ENCODE measurements at regions of chr4 and their contacts with region 1.

Region 1: DNA sequence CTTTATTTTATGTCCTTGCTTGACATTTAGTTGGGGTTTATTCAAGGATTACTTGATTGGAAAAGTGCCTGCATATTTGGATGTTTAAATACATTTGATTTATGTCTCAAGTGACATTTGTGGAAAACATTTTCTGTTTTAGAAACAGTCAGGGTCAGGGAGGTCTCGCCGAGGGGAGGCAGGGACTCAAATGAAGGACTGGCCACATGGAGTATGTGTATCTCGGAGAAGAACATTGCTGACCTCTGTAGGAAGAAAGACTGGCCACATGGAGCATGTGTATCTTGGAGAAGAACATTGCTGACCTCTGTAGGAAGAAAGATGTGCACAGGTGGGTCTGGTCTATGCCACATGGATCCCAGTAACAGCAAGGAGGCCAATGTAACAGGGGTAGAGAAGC is 233.6 kb downstream of the TRIML1 start:
- DNase-seq: no peak
- ATAC-seq: peak; percentile 86
- H3K4me3 ChIP-seq: no peak overlapping the region
- H3K27ac ChIP-seq: no peak overlapping the region
- H3K4me1 ChIP-seq: no peaks in the 10 kb centered on the region
- H3K27me3 ChIP-seq: no peaks in the 10 kb centered on the region

Region 2: DNA sequence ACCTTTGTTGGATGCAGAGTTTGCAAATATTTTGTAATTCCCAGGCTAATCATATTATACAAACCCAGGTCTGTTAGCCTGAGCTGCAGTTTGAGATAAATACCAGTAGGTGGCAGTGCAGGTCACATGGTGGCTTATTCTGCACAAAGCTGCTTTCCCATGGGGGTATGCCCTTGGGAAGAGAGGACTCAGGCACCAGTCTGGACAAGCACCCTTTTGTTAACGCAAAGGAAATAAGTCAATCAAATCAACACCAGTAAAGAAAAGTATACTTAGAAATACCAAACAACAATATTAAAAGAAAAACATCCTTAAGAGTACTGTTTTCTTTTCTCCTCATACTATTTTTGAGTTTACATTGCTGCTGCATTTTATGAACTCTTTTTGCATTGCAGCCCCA is 766.2 kb before region 1 on chr4:
- intact Hi-C with region 1: loop called (anchors 2 to 5 kb)
- DNase-seq: no peak
- ATAC-seq: no peak
- H3K4me3 ChIP-seq: no peak overlapping the region
- H3K27ac ChIP-seq: no peak overlapping the region
- H3K4me1 ChIP-seq: no peaks in the 10 kb centered on the region
- H3K27me3 ChIP-seq: no peaks in the 10 kb centered on the region

Region 3: GRCh38 chr4:187666697-187667494 is 705.9 kb before region 1 on chr4:
- intact Hi-C with region 1: loop called in 1 of 2 experiments (anchors 5 kb)
- DNase-seq: no peak
- ATAC-seq: peak; percentile 15
- H3K4me3 ChIP-seq: no peak overlapping the region
- H3K27ac ChIP-seq: no peak overlapping the region
- H3K4me1 ChIP-seq: peaks cover 2 to 4% of the 10 kb centered on the region in 2 donors
- H3K27me3 ChIP-seq: no peaks in the 10 kb centered on the region

Region 4: DNA sequence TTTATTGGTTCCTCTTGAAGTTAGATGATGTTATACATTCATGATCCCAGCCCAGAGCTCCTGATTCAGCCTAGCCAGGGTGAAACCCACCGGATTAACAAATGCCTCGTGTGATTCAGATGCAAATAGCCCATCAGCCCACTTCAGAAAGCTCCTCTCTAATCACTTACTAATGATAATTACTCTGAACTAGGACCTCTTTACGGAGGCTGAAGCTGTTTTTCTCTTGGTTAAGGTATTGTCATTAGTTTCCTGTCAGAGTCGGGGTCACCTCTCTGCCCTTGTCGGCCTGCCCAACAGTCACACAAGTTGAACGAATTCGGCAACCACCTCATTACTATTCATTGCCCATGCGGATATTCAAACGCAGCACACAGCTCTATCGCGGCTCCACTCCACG is 340.7 kb before region 1 on chr4:
- intact Hi-C with region 1: no loop called
- DNase-seq: no peak
- ATAC-seq: no peak
- H3K4me3 ChIP-seq: no peak overlapping the region
- H3K27ac ChIP-seq: no peak overlapping the region
- H3K4me1 ChIP-seq: no peaks in the 10 kb centered on the region
- H3K27me3 ChIP-seq: no peaks in the 10 kb centered on the region